H1 (cell line): ENCODE measurements at regions of chr5 and their contacts with region 1.

Region 1: GRCh38 chr5:40904205-40904993 is 4.9 kb upstream of the C7 start:
- DNase-seq: peak; percentile 68 to 74
- H3K4me3 ChIP-seq: no peak overlapping the region
- H3K27ac ChIP-seq: no peak overlapping the region
- H3K4me1 ChIP-seq: peaks cover 0 to 5% (median 2%) of the 10 kb centered on the region in 4 experiments; a peak in 2 of 7 replicates
- H3K27me3 ChIP-seq: no peaks in the 10 kb centered on the region
- CTCF ChIP-seq: peak; percentile 67 to 98 (median 90)
- EP300 ChIP-seq: no peak
- POLR2A ChIP-seq: no peak
- RAD21 ChIP-seq: peak; percentile 99

Region 2: GRCh38 chr5:40798012-40798855 is 106.2 kb before region 1 on chr5 and contains the start of gene PRKAA1:
- CTCF ChIA-PET with region 1: no interaction called
- POLR2A ChIA-PET with region 1: no interaction called
- DNase-seq: peak; percentile 58 to 95
- H3K4me3 ChIP-seq: peak within 1 kb of the TSS; percentile 68 to 98 (median 92)
- H3K27ac ChIP-seq: peak within 1 kb of the TSS; percentile 95
- H3K4me1 ChIP-seq: peaks cover 0 to 5% (median 0%) of the 10 kb centered on the region in 4 experiments; a peak in 2 of 7 replicates
- H3K27me3 ChIP-seq: no peaks in the 10 kb centered on the region
- CTCF ChIP-seq: peak; percentile 62 to 67 (median 63)
- EP300 ChIP-seq: no peak
- POLR2A ChIP-seq: peak; percentile 88 to 92
- RAD21 ChIP-seq: peak; percentile 25 to 43; a peak in 3 of 4 replicates
- total RNA-seq, gene PRKAA1: 30.3 and 33.1 TPM in 2 replicates

Region 3: GRCh38 chr5:40914835-40915234 is 10.4 kb after region 1 on chr5:
- CTCF ChIA-PET with region 1: interaction called, 10 read pairs
- POLR2A ChIA-PET with region 1: interaction called, 3 read pairs
- DNase-seq: no peak
- H3K4me3 ChIP-seq: no peak overlapping the region
- H3K27ac ChIP-seq: no peak overlapping the region
- H3K4me1 ChIP-seq: peaks cover 1 to 8% (median 4%) of the 10 kb centered on the region in 4 experiments; a peak in 3 of 7 replicates
- H3K27me3 ChIP-seq: peaks cover 0 to 2% (median 0%) of the 10 kb centered on the region in 4 experiments; a peak in 3 of 7 replicates
- CTCF ChIP-seq: no peak
- EP300 ChIP-seq: no peak
- POLR2A ChIP-seq: no peak
- RAD21 ChIP-seq: no peak

Region 4: DNA sequence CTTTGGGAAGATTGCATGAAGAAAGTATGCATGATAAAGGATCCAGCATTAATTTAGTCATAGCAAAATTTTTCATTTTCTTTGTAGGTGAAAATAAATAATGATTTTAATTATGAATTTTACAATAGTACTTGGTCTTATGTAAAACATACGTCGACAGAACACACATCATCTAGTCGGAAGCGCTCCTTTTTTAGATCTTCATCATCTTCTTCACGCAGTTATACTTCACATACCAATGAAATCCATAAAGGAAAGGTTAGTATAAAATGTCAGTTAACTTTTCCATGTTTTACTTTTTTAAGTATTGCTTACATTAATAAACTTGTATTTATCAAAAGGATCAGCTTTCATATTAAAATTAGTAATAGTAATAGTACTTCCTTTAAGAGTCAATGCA is 40.7 kb after region 1 on chr5:
- CTCF ChIA-PET with region 1: interaction called, 10 read pairs
- POLR2A ChIA-PET with region 1: no interaction called
- DNase-seq: no peak
- H3K4me3 ChIP-seq: no peak overlapping the region
- H3K27ac ChIP-seq: no peak overlapping the region
- H3K4me1 ChIP-seq: no peaks in the 10 kb centered on the region
- H3K27me3 ChIP-seq: no peaks in the 10 kb centered on the region
- CTCF ChIP-seq: no peak
- EP300 ChIP-seq: no peak
- POLR2A ChIP-seq: no peak
- RAD21 ChIP-seq: no peak

Region 5: DNA sequence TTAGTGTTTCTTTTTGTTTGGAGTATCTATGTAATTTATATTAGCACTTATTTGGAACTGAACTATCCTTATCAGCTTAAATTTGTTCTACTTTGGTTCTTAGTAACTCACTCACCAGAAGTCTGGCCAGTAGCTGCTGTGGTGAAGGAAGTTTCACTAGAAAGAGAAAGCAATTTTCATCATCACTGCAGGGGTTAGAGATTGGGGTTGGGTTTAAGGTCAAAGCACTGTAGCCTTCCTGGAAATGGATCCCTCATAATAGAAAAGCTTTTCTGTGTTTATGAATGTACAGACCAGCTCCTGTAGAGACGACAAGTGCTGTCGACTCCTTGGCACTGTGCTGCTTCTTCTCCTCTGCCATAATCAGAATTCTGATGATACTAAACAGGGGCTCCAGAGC is 144.6 kb after region 1 on chr5:
- CTCF ChIA-PET with region 1: no interaction called
- POLR2A ChIA-PET with region 1: no interaction called
- DNase-seq: no peak
- H3K4me3 ChIP-seq: no peak overlapping the region
- H3K27ac ChIP-seq: no peak overlapping the region
- H3K4me1 ChIP-seq: no peaks in the 10 kb centered on the region
- H3K27me3 ChIP-seq: no peaks in the 10 kb centered on the region
- CTCF ChIP-seq: no peak
- EP300 ChIP-seq: no peak
- POLR2A ChIP-seq: no peak
- RAD21 ChIP-seq: no peak

Region 6: DNA sequence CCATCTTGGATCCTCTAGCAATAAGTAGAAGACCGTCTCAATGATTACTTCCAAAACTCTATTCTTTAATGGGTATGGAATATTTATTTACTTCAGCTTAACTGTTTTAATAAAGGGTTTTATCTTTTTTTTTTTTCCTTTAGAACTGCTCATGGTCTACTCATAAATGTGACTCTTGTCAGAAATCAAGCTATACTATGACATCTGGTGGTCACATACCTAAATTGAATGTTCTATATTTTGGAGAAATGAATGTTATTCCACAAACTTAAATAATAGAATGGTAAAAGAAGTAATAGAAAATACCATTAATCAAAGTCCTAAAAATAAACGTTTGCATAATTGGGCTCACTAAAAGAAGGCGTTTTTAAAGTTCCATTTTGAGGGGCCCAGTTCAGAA is 737.2 kb after region 1 on chr5:
- CTCF ChIA-PET with region 1: interaction called, 21 read pairs
- POLR2A ChIA-PET with region 1: no interaction called
- DNase-seq: no peak
- H3K4me3 ChIP-seq: no peak overlapping the region
- H3K27ac ChIP-seq: no peak overlapping the region
- H3K4me1 ChIP-seq: peaks cover 0 to 3% (median 0%) of the 10 kb centered on the region in 4 experiments; a peak in 2 of 7 replicates
- H3K27me3 ChIP-seq: no peaks in the 10 kb centered on the region; a peak in 1 of 7 replicates
- CTCF ChIP-seq: no peak
- EP300 ChIP-seq: no peak
- POLR2A ChIP-seq: no peak
- RAD21 ChIP-seq: peak in 1 of 2 experiments; percentile 46; a peak in 3 of 4 replicates